Left cardiac atrium (tissue), 4 donors: ENCODE measurements at regions of chr3 and their contacts with region 1.

Region 1: DNA sequence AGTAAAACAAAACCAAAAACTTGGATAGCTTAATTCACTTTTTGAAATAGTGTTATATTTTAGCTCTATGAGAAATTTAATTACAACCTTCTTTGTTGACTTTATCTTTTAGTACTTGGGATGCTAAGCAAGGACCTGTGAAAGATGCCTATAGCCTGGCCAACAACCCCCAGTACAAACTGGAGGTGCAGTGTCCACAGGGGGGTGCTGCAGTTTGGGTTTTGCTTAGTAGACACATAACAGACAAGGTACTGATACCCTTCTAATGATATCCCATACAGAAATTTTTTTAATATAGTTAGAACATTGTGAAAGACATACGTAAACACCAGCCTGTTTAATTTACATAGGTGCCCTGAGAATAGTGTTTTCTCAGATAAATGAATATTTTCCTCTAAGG is 35.3 kb downstream of the CAPN7 start:
- DNase-seq: no peak
- ATAC-seq: no peak

Region 2: GRCh38 chr3:15205934-15206661 is 35.2 kb before region 1 on chr3 and contains the start of gene CAPN7:
- intact Hi-C with region 1: no loop called
- DNase-seq: peak; percentile 97
- ATAC-seq: peak; percentile 98 to 99
- total RNA-seq, gene CAPN7: 28.4 to 28.9 TPM

Region 3: DNA sequence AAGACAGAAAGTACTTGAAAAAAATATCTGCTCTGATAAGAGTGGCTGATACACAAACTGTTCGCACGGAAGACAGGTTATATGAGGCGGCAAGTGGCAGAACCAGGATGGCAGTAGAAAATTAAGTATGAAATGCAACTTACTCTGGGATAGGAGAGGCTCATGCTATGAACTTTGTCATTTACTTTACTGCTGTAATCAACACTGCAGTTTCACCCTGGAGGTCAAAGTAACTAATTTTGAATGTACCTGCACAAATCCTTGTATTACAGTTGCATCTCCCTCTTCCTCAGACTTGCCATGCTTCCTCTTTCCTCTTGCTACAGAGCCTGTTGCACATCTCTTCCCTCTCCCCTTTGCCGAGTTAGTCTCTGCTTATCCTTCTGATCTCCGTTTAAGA is 321.2 kb after region 1 on chr3:
- intact Hi-C with region 1: loop called in 1 of 2 experiments (anchors 10 kb)
- DNase-seq: no peak
- ATAC-seq: no peak